Panc1 (cell line): ENCODE measurements at regions of chrX and their contacts with region 1.

Region 1: DNA sequence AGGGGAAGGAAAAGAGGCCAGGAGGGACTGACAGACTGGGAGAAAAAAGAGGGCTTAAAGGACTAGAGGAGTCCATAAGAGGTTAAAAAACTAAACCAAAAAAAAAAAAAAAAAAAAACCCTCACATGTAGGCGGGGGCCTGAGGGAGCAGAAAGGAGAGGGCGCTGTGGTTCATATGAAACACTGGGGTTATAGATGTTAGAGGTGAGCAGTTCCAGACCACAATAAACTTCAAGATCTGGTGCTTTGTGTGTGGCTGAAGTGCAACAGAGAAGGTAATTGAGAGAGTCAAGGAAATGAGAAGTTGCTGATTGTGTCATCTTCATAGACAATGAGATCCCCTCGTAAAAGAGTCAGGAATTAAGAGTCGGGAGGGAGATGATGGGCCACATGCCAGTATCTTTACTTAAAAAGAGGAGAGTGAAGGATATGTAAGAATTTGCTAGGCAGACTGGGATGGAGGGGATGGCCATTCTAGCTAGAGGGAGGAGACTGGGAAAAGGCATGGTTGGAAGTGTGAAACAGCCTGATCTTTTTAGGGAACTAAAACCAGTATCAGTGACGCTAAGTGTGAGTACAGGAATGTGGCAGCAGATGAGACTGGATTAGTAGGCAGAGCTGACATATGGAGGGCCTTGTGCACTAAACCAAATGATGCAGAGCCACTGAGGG is 18.4 kb upstream of the OGT start:
- DNase-seq: no peak
- ATAC-seq: no peak
- H3K4me3 ChIP-seq: no peak overlapping the region
- H3K27ac ChIP-seq: no peak overlapping the region
- H3K4me1 ChIP-seq: no peaks in the 10 kb centered on the region
- H3K27me3 ChIP-seq: no peaks in the 10 kb centered on the region
- CTCF ChIP-seq: no peak

Region 2: GRCh38 chrX:69919749-69920148 is 1594.8 kb before region 1 on chrX:
- CTCF ChIA-PET with region 1: no interaction called
- POLR2A ChIA-PET with region 1: no interaction called
- in situ Hi-C with region 1: no loop called
- intact Hi-C with region 1: no loop called
- DNase-seq: no peak
- ATAC-seq: no peak
- H3K4me3 ChIP-seq: no peak overlapping the region
- H3K27ac ChIP-seq: no peak overlapping the region
- H3K4me1 ChIP-seq: no peaks in the 10 kb centered on the region
- H3K27me3 ChIP-seq: no peaks in the 10 kb centered on the region
- CTCF ChIP-seq: no peak

Region 3: GRCh38 chrX:71492231-71493065 is 22.1 kb before region 1 on chrX:
- CTCF ChIA-PET with region 1: no interaction called
- POLR2A ChIA-PET with region 1: interaction called, 12 read pairs
- in situ Hi-C with region 1: no loop called
- intact Hi-C with region 1: no loop called
- DNase-seq: no peak
- ATAC-seq: peak; percentile 85
- H3K4me3 ChIP-seq: peak overlapping the region; percentile 42 to 54
- H3K27ac ChIP-seq: no peak overlapping the region
- H3K4me1 ChIP-seq: no peaks in the 10 kb centered on the region
- H3K27me3 ChIP-seq: no peaks in the 10 kb centered on the region
- CTCF ChIP-seq: no peak